ENCODE measurements at regions of chr9 and their contacts with region 1.

Region 1: GRCh38 chr9:99076483-99077171 is 28.3 kb upstream of the TGFBR1 start:
- DNase-seq: peak; percentile 60 to 76
- ATAC-seq: peak; percentile 93 to 97 (median 95)
- H3K4me3 ChIP-seq: no peak overlapping the region
- H3K4me3 Mint-ChIP-seq: peak overlapping the region; percentile 80
- H3K27ac ChIP-seq: peak overlapping the region; percentile 67
- H3K27ac Mint-ChIP-seq: peak overlapping the region; percentile 93 to 98
- H3K4me1 ChIP-seq: peaks cover 39% of the 10 kb centered on the region
- H3K4me1 Mint-ChIP-seq: peaks cover 67 to 73% of the 10 kb centered on the region in 2 donors
- H3K27me3 ChIP-seq: no peaks in the 10 kb centered on the region
- H3K27me3 Mint-ChIP-seq: no peaks in the 10 kb centered on the region
- CTCF ChIP-seq: no peak

Region 2: GRCh38 chr9:98168941-98169488 is 907.6 kb before region 1 on chr9:
- intact Hi-C with region 1: no loop called
- DNase-seq: peak in 1 of 2 donors; percentile 46
- ATAC-seq: peak; percentile 49 to 86 (median 66)
- H3K4me3 ChIP-seq: no peak overlapping the region
- H3K4me3 Mint-ChIP-seq: no peak overlapping the region
- H3K27ac ChIP-seq: peak overlapping the region; percentile 61
- H3K27ac Mint-ChIP-seq: peak overlapping the region; percentile 34 to 88
- H3K4me1 ChIP-seq: peaks cover 31% of the 10 kb centered on the region
- H3K4me1 Mint-ChIP-seq: peaks cover 4 to 14% of the 10 kb centered on the region in 2 donors
- H3K27me3 ChIP-seq: no peaks in the 10 kb centered on the region
- H3K27me3 Mint-ChIP-seq: no peaks in the 10 kb centered on the region
- CTCF ChIP-seq: no peak

Region 3: GRCh38 chr9:99040911-99041582 is 35.6 kb before region 1 on chr9:
- intact Hi-C with region 1: loop called (anchors 5 kb)
- DNase-seq: peak in 1 of 2 donors; percentile 33
- ATAC-seq: peak; percentile 77 to 85 (median 84)
- H3K4me3 ChIP-seq: no peak overlapping the region
- H3K4me3 Mint-ChIP-seq: peak overlapping the region; percentile 72
- H3K27ac ChIP-seq: peak overlapping the region; percentile 45
- H3K27ac Mint-ChIP-seq: peak overlapping the region; percentile 78 to 81
- H3K4me1 ChIP-seq: peaks cover 59% of the 10 kb centered on the region
- H3K4me1 Mint-ChIP-seq: peaks cover 68 to 72% of the 10 kb centered on the region in 2 donors
- H3K27me3 ChIP-seq: no peaks in the 10 kb centered on the region
- H3K27me3 Mint-ChIP-seq: no peaks in the 10 kb centered on the region
- CTCF ChIP-seq: no peak

Region 4: DNA sequence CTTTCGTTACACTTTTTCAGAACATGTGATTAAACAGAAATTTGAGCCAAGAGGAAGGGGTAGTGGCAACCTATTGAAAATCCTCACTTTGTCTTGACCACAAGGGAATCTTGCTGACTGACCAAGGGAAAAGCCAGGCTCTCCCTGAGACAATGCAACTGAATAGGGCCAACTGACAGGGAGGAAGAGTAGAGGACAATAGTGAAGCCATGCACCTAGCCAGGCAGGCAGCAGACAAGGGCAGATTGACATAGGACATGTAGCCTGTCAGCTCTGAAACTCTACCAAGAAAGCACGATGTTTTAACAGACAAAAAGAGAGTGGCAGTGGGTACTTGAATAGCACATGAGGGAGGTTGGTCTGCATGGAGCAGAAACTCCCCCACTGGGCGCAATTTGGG is 19.8 kb after region 1 on chr9:
- intact Hi-C with region 1: loop called (anchors 2 kb)
- DNase-seq: no peak
- ATAC-seq: no peak
- H3K4me3 ChIP-seq: no peak overlapping the region
- H3K4me3 Mint-ChIP-seq: no peak overlapping the region
- H3K27ac ChIP-seq: no peak overlapping the region
- H3K27ac Mint-ChIP-seq: no peak overlapping the region
- H3K4me1 ChIP-seq: peaks cover 42% of the 10 kb centered on the region
- H3K4me1 Mint-ChIP-seq: peaks cover 82 to 84% of the 10 kb centered on the region in 2 donors
- H3K27me3 ChIP-seq: no peaks in the 10 kb centered on the region
- H3K27me3 Mint-ChIP-seq: no peaks in the 10 kb centered on the region
- CTCF ChIP-seq: no peak

Measured in natural killer cell (primary cell).